GM12878 (cell line): ENCODE measurements at regions of chr7 and their contacts with region 1.

Region 1: DNA sequence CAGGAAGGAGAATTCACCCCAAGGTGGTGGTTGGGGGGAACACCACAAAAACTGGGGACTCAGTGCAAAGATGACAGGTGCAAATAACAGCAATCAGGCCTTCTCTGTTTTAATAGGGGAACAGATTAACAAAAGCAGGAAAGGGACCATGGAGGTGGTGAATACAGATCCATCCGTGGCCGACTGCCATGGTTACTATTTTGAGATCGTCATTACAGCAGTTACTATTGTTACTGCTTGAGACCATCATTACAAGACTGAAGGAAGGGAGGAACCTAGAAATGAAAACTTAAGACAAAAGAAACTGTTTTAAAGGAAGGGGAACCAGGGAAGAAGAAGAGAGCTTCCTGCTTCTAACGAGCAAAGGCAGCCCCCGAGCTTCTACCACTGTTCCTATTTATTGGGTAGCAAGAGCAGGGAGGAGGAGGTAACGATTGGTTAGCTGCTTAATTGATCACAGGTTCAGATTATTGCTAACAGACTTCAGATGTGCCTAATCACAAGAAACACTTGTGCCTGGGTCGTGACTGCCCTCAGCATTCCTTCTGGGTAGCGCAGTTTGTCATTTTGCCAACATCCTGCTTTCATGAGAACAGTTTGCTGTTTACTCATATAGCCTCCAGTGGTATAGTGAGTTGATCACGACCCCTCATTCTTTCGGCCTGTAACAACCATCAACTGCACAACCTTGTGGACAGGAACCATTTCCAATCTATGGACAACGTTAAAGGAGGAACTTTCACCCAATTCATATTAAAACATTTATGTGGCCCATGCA is 216.3 kb downstream of the CHCHD3 start:
- DNase-seq: no peak
- ATAC-seq: no peak
- H3K4me3 ChIP-seq: no peak overlapping the region
- H3K27ac ChIP-seq: no peak overlapping the region
- H3K4me1 ChIP-seq: peaks cover 8% of the 10 kb centered on the region; the same call in 1 of the 2 replicates
- H3K27me3 ChIP-seq: no peaks in the 10 kb centered on the region
- CTCF ChIP-seq: no peak
- EP300 ChIP-seq: no peak
- POLR2A ChIP-seq: no peak
- RAD21 ChIP-seq: no peak

Region 2: DNA sequence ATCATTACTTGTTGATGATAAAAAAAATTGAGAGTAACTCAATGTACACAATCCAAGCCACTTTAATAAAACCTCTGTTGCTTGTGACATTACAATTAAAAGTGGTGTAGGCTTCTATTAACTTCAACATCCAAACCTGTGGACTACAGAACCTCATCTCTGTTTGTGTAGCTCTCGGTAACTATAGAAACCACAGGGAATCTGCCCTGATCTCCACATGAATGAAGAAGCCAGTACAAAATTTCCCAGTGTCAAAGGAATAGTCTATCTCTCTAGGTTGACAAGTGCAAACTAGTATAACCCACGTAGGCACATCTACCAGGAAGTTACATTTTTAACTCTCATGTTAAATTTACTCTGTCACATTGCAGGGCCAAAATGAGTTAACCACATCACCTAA is 12.0 kb after region 1 on chr7:
- CTCF ChIA-PET with region 1: interaction called, 3 read pairs
- POLR2A ChIA-PET with region 1: interaction called, 3 read pairs
- RAD21 ChIA-PET with region 1: interaction called, 14 read pairs
- SMC1A ChIA-PET with region 1: interaction called, 53 read pairs
- in situ Hi-C with region 1: no loop called
- intact Hi-C with region 1: no loop called
- DNase-seq: no peak
- ATAC-seq: no peak
- H3K4me3 ChIP-seq: no peak overlapping the region
- H3K27ac ChIP-seq: no peak overlapping the region
- H3K4me1 ChIP-seq: no peaks in the 10 kb centered on the region
- H3K27me3 ChIP-seq: no peaks in the 10 kb centered on the region
- CTCF ChIP-seq: no peak
- EP300 ChIP-seq: no peak
- POLR2A ChIP-seq: no peak
- RAD21 ChIP-seq: no peak

Region 3: DNA sequence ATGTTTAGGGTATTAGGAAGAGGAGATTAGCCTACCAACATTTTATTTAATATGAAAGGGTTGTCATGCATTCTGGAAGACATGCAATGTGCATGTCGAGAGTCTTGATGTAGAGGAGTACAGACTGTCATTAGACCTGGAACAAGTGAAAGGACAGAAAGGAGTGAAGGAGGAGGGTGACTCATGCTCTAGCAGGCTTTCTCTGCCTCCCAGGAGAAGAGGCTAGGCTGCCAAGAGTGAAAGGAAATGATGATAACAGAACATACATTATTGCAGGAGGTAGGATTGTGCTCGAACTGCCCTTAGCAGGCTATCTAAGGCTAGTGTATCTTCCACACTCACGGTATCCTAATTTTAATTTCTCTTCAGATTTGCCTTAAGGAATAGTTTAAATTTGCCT is 616.1 kb after region 1 on chr7:
- CTCF ChIA-PET with region 1: no interaction called
- POLR2A ChIA-PET with region 1: no interaction called
- RAD21 ChIA-PET with region 1: no interaction called
- SMC1A ChIA-PET with region 1: no interaction called
- in situ Hi-C with region 1: no loop called
- intact Hi-C with region 1: no loop called
- DNase-seq: no peak
- ATAC-seq: no peak
- H3K4me3 ChIP-seq: no peak overlapping the region
- H3K27ac ChIP-seq: no peak overlapping the region
- H3K4me1 ChIP-seq: no peaks in the 10 kb centered on the region
- H3K27me3 ChIP-seq: no peaks in the 10 kb centered on the region
- CTCF ChIP-seq: no peak
- EP300 ChIP-seq: no peak
- POLR2A ChIP-seq: no peak
- RAD21 ChIP-seq: no peak